ENCODE measurements at regions of chr13 and their contacts with region 1.

Region 1: DNA sequence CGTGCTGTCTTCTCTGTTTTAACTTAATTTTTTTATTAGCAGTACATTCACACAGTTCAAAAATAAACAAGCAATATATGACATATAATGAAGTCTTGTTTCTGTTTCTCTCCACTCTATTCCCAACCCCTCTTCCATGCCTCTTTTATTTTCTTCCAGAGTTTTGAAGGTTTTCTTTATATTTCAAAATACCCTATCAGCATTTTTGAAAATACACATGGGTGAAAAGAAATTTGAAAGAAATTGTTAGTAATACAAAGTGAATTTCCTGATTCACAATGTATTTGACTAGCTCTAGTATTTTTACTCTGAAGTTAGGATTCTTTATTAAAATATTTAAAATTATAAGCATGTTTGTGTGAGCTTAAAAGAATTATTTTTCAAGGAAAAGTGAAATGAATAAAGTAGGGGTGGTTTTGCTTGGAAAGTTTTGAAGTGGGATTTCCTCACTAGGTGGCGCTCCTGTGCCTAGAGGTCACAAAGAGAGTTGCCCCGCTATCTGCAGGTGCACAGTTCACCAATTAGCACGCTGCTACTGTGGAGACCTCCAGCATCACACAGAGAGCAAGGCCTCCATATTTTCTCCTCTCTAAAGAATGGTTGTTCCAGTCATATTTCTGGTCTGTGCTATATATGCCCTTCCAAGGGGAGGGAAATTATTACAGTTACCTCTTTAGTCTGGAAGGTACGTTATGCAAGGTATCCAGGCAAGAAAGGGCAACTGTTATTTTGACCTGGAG is 37.6 kb downstream of the SOX21 start:
- DNase-seq: peak; percentile 52
- H3K4me3 ChIP-seq: no peak overlapping the region
- H3K27ac ChIP-seq: no peak overlapping the region
- H3K4me1 ChIP-seq: no peaks in the 10 kb centered on the region
- H3K27me3 ChIP-seq: peaks cover 4% of the 10 kb centered on the region; the same call in 1 of the 2 replicates
- CTCF ChIP-seq: peak; percentile 83
- EP300 ChIP-seq: no peak
- RAD21 ChIP-seq: peak; percentile 73

Region 2: DNA sequence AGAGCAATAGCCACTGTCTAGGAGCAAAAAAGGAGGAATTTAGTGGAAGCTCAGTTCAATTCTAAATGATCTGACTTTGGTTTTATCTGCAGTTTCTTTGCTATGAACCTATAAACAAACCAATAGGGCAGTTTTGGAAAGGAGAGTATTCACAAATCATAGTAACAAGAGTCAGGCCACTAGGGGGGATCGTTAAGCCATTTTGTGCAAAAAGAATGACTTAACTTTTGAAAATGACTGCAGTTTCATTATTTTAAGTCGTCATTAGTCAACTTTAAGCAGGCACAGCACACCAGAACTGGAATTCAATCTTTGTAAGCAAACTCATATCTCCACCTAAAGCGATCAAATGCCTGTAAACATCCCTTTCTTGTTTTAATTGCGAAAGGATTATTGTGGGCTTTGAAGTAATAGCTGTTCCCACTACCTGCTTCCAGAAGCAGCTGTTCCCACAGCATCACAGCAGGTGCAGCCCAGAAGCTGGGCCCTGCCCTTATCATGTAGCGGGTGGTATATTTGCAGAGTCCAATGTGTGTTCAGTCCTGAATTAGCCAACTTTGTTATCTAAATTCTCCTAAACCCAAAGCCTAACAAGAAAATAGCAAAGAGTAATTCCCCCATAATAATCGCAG is 14.0 kb before region 1 on chr13:
- CTCF ChIA-PET with region 1: interaction called, 33 read pairs
- POLR2A ChIA-PET with region 1: no interaction called
- DNase-seq: peak; percentile 13
- H3K4me3 ChIP-seq: no peak overlapping the region
- H3K27ac ChIP-seq: no peak overlapping the region
- H3K4me1 ChIP-seq: peaks cover 0 to 5% of the 10 kb centered on the region in 2 experiments; a peak in 2 of 4 replicates
- H3K27me3 ChIP-seq: peaks cover 21% of the 10 kb centered on the region; the same call in 1 of the 2 replicates
- CTCF ChIP-seq: peak; percentile 48
- EP300 ChIP-seq: no peak
- RAD21 ChIP-seq: peak; percentile 54

Region 3: DNA sequence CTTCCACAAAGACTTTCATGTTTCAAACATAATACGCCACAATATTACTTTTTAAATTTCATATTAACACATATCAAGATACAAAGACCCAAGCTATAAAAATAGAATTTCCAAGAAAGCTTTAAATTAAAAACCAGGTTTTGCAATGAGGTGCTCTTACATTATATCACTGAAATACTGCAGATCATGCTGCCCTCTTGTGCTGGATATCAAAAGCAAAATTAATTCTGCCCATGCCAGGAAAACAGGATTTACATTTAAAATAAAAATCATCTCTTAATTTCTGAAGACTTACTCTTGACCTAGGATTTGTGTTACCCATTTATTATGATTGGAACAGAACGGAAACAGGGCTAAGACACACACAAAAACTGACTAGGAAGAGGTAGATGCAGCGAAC is 481.4 kb after region 1 on chr13:
- CTCF ChIA-PET with region 1: interaction called, 11 read pairs
- POLR2A ChIA-PET with region 1: no interaction called
- DNase-seq: peak; percentile 16
- H3K4me3 ChIP-seq: no peak overlapping the region
- H3K27ac ChIP-seq: no peak overlapping the region
- H3K4me1 ChIP-seq: peaks cover 0 to 10% of the 10 kb centered on the region in 2 experiments; a peak in 2 of 4 replicates
- H3K27me3 ChIP-seq: no peaks in the 10 kb centered on the region
- CTCF ChIP-seq: peak; percentile 75
- EP300 ChIP-seq: no peak
- RAD21 ChIP-seq: peak; percentile 72

Region 4: GRCh38 chr13:96273196-96273595 is 1598.4 kb after region 1 on chr13:
- CTCF ChIA-PET with region 1: no interaction called
- POLR2A ChIA-PET with region 1: no interaction called
- DNase-seq: no peak
- H3K4me3 ChIP-seq: no peak overlapping the region
- H3K27ac ChIP-seq: no peak overlapping the region
- H3K4me1 ChIP-seq: no peaks in the 10 kb centered on the region
- H3K27me3 ChIP-seq: no peaks in the 10 kb centered on the region
- CTCF ChIP-seq: no peak
- EP300 ChIP-seq: no peak
- RAD21 ChIP-seq: no peak

Measured in SK-N-SH (cell line).